ENCODE measurements at regions of chr12 and their contacts with region 1.

Region 1: DNA sequence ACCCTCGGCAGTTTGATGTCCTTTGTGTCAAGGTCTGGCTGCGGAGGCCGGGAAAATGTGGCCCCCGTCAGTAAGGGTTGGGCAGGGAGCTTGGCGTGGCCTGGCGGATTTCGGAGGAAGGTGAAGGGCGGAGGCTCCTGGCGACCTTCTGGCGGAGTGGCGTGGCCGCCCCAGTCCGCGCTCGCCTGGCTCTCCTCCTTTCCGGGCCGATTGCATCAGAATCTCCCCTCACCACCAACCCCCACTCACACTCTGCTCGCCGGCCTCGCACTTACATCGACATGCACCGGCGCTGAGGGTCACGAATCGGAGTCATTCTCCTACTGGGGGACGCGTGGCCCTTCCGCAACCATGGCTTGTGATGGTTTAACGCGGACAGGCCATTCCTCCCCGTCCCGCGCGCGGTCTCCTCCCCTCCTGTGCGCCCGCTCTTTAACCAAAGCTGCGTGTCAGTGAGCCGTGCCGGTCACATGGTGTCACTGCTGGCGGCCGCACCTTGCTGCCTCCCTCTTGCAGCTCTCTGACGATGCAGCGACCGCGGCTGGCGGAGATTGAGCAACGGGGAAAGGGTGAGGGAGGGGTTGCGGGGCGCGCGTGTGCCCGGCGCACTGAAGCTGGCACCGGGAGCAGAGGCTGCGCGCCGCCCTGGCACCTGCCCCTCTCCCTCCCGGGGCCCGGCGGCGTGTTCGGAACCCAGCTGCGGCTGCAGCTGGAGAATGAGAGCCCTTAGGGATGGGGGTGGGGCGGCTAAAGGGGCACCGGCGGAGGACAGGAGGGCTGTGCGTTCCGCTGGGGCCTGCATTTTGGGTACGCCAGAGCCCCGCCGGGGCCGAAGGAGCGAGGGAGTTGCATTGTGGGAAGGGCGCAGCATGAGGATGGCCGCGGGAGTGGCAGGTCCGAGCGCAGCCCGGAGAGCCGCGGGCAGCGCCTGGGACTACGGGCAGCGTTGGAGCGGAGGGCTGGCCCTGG is at the start of gene SLC38A1:
- DNase-seq: peak; percentile 88 to 96 (median 89)
- H3K4me3 ChIP-seq: peak within 1 kb of the TSS; percentile 91 to 96
- H3K4me3 Mint-ChIP-seq: no peak within 1 kb of the TSS
- H3K27ac ChIP-seq: peak within 1 kb of the TSS; percentile 95
- H3K27ac Mint-ChIP-seq: no peak within 1 kb of the TSS
- H3K4me1 ChIP-seq: peaks cover 54% of the 10 kb centered on the region
- H3K4me1 Mint-ChIP-seq: peaks cover 16 to 47% (median 23%) of the 10 kb centered on the region in 4 donors
- H3K27me3 ChIP-seq: no peaks in the 10 kb centered on the region
- H3K27me3 Mint-ChIP-seq: no peaks in the 10 kb centered on the region
- total RNA-seq, gene SLC38A1: 265 to 272 TPM

Region 2: DNA sequence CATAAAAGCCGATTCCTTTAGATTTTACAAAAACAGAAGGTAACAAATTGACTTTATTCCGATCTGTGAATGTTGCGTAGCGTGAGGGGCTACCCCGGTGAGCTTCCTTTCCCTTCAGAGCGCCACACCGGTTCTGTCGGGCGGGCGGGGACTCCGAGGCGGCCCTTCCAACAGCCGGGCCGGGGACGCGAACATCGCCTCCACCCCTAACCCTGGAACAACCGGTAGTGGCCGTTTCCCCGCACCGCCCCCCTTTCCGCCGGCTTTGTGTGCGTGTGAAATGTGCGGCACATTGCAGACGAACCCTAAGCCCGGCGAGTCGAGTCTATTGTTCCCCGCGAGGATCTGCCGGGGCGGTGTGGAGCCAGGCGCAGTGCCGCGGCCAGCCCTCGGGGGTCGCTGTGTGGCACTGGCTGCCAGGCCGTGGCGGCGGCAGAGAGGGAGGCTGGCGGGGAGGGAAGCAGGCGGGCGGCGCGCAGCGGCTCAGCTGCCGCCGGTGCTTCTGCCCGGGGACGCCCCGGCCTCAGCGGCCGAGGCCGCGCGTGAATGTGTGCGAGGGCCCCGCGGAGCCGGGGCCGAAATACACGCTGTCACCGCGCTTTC is 540.1 kb before region 1 on chr12:
- CTCF ChIA-PET with region 1: no interaction called
- POLR2A ChIA-PET with region 1: interaction called, 23 read pairs
- intact Hi-C with region 1: loop called (anchors 2 kb)
- DNase-seq: peak; percentile 97 to 98 (median 98)
- H3K4me3 ChIP-seq: peak overlapping the region; percentile 78 to 89
- H3K4me3 Mint-ChIP-seq: peak overlapping the region; percentile 92 to 100 (median 100)
- H3K27ac ChIP-seq: peak overlapping the region; percentile 98
- H3K27ac Mint-ChIP-seq: peak overlapping the region; percentile 87 to 99 (median 99)
- H3K4me1 ChIP-seq: peaks cover 41% of the 10 kb centered on the region
- H3K4me1 Mint-ChIP-seq: peaks cover 18 to 56% (median 24%) of the 10 kb centered on the region in 4 donors
- H3K27me3 ChIP-seq: no peaks in the 10 kb centered on the region
- H3K27me3 Mint-ChIP-seq: no peaks in the 10 kb centered on the region

Region 3: GRCh38 chr12:46209914-46210872 is 58.7 kb before region 1 on chr12:
- CTCF ChIA-PET with region 1: interaction called, 20 read pairs
- POLR2A ChIA-PET with region 1: interaction called, 552 read pairs
- intact Hi-C with region 1: loop called (anchors 1 kb)
- DNase-seq: peak; percentile 55 to 81 (median 62)
- H3K4me3 ChIP-seq: no peak overlapping the region
- H3K4me3 Mint-ChIP-seq: peak overlapping the region in 7 of 8 donors; percentile 56 to 83 (median 66)
- H3K27ac ChIP-seq: peak overlapping the region; percentile 87
- H3K27ac Mint-ChIP-seq: peak overlapping the region; percentile 96 to 100 (median 99)
- H3K4me1 ChIP-seq: peaks cover 79% of the 10 kb centered on the region
- H3K4me1 Mint-ChIP-seq: peaks cover 68 to 83% (median 76%) of the 10 kb centered on the region in 4 donors
- H3K27me3 ChIP-seq: no peaks in the 10 kb centered on the region
- H3K27me3 Mint-ChIP-seq: no peaks in the 10 kb centered on the region

Region 4: DNA sequence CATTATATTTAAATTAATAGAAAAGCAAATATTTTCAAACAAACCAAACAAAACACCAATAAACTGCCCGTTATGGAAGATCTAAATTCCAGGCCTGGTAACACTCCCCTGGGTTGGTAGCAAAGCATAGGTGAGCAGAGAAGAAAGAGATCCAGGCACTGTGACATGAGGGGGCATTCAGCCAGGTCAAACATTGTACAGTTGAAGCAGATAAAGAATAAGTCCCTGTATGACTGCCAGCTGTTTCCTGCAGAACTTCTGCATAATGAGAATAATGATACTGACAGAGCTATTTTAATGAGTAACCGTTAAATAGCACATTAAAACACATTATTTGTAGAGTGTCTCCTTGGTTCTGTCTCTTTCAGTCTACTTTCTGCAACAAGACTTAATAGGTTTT is 35.5 kb before region 1 on chr12:
- CTCF ChIA-PET with region 1: no interaction called
- POLR2A ChIA-PET with region 1: interaction called, 13 read pairs
- intact Hi-C with region 1: no loop called
- DNase-seq: no peak
- H3K4me3 ChIP-seq: no peak overlapping the region
- H3K4me3 Mint-ChIP-seq: peak overlapping the region in 2 of 8 donors; percentile 8 to 52
- H3K27ac ChIP-seq: no peak overlapping the region
- H3K27ac Mint-ChIP-seq: peak overlapping the region; percentile 14 to 82 (median 74)
- H3K4me1 ChIP-seq: peaks cover 70% of the 10 kb centered on the region
- H3K4me1 Mint-ChIP-seq: peaks cover 54 to 90% (median 67%) of the 10 kb centered on the region in 4 donors
- H3K27me3 ChIP-seq: no peaks in the 10 kb centered on the region
- H3K27me3 Mint-ChIP-seq: no peaks in the 10 kb centered on the region

Region 5: DNA sequence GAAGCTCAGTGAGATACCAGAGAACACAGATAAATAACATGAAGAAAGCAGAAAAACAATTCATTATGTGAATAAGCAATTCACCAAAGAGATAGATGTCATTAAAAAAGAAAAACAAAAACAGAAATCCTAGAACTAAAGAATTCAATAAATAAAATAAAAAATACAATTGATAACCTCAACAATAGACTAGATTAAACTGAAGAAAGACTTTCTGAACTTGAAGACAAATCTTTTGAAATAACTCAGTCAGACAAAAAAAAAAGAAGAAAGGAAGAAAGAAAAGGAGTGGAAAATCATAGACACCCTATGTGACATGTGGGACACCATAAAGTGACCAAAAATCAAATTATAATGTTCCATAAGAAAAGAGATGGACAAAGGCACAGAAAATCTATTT is 14.0 kb after region 1 on chr12:
- CTCF ChIA-PET with region 1: interaction called, 3 read pairs
- POLR2A ChIA-PET with region 1: interaction called, 17 read pairs
- intact Hi-C with region 1: no loop called
- DNase-seq: no peak
- H3K4me3 ChIP-seq: no peak overlapping the region
- H3K4me3 Mint-ChIP-seq: no peak overlapping the region
- H3K27ac ChIP-seq: no peak overlapping the region
- H3K27ac Mint-ChIP-seq: peak overlapping the region in 1 of 7 donors; percentile 61
- H3K4me1 ChIP-seq: no peaks in the 10 kb centered on the region
- H3K4me1 Mint-ChIP-seq: no peaks in the 10 kb centered on the region
- H3K27me3 ChIP-seq: no peaks in the 10 kb centered on the region
- H3K27me3 Mint-ChIP-seq: no peaks in the 10 kb centered on the region

Region 6: DNA sequence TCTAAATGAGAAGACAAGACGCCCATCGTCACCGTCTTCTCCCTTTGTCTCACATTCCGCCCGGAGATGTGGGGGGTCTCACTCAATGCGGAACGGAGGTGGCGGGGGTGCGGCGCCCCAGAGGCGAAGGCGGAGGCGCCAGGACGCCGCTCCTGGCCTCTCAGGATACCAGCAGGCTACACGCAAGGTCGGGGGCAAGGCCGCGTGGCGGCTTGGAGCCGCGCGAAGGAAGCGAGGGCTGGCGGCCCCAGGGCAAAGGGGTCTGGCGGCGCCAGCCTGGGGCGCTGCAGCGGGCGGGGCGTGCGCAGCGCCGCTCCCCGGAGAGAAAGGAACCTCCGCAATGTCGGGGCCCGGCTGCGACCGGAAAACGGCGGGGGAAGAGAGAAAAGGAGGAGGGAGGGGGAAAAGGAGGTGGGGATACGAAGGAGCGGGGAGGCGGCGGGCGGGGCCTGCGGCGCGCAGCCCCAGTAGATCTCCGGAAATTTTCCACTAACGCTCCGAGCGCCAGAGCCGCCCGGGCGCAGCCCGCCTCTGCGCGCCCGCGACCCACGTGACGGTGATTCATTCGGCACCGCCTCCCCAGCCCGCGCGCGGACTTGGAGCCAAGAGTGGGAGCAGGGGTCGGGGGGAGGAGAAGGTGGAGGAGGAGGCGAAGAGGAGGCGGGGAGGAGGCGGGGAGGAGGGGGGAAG is 114.2 kb after region 1 on chr12:
- CTCF ChIA-PET with region 1: no interaction called
- POLR2A ChIA-PET with region 1: interaction called, 9 read pairs
- intact Hi-C with region 1: loop called (anchors 1 kb)
- DNase-seq: peak; percentile 88 to 95 (median 90)
- H3K4me3 ChIP-seq: peak overlapping the region; percentile 26 to 78
- H3K4me3 Mint-ChIP-seq: peak overlapping the region; percentile 82 to 94 (median 90)
- H3K27ac ChIP-seq: peak overlapping the region; percentile 83
- H3K27ac Mint-ChIP-seq: peak overlapping the region; percentile 87 to 98 (median 97)
- H3K4me1 ChIP-seq: peaks cover 19% of the 10 kb centered on the region
- H3K4me1 Mint-ChIP-seq: peaks cover 19 to 31% (median 25%) of the 10 kb centered on the region in 4 donors
- H3K27me3 ChIP-seq: no peaks in the 10 kb centered on the region
- H3K27me3 Mint-ChIP-seq: no peaks in the 10 kb centered on the region

Measured in CD4-positive, alpha-beta memory T cell (primary cell).